Colonic mucosa (tissue), 4 donors: ENCODE measurements at regions of chr13 and their contacts with region 1.

Region 1: GRCh38 chr13:31050486-31051400 is 111.0 kb downstream of the HSPH1 start:
- DNase-seq: no peak
- H3K4me3 ChIP-seq: no peak overlapping the region
- H3K27ac ChIP-seq: no peak overlapping the region
- H3K4me1 ChIP-seq: peaks cover 8% of the 10 kb centered on the region
- H3K27me3 ChIP-seq: no peaks in the 10 kb centered on the region
- CTCF ChIP-seq: no peak

Region 2: DNA sequence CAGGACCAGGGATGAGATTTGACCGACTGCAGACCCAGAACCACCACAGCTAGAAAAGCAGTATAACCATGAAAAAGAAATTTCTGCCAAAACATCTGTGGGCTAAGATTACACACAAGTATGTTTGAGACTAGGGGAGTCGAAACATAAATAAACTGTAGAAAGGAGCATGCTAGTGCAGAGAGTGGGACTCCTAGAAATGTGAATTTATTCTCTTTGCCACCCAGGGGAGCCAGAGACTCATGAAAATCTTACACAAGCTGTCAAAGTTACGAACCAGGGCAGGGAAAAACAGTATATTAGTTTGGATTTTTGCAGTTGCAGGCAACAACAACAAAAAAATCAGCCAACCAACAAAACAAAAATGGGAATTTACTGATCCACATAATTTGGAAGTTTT is 123.3 kb after region 1 on chr13:
- intact Hi-C with region 1: loop called (anchors 10 kb)
- DNase-seq: no peak
- H3K4me3 ChIP-seq: no peak overlapping the region
- H3K27ac ChIP-seq: no peak overlapping the region
- H3K4me1 ChIP-seq: no peaks in the 10 kb centered on the region
- H3K27me3 ChIP-seq: no peaks in the 10 kb centered on the region
- CTCF ChIP-seq: no peak